H1 (cell line): ENCODE measurements at regions of chr20 and their contacts with region 1.

Region 1: GRCh38 chr20:9903048-9903655 is 64.3 kb upstream of the PAK5 start:
- DNase-seq: peak in 1 of 2 experiments; percentile 60
- H3K4me3 ChIP-seq: no peak overlapping the region
- H3K27ac ChIP-seq: no peak overlapping the region
- H3K4me1 ChIP-seq: no peaks in the 10 kb centered on the region
- H3K27me3 ChIP-seq: no peaks in the 10 kb centered on the region
- CTCF ChIP-seq: peak in 2 of 3 experiments; percentile 68 to 81; a peak in 3 of 4 replicates
- EP300 ChIP-seq: no peak
- POLR2A ChIP-seq: no peak
- RAD21 ChIP-seq: peak; percentile 46 to 61; a peak in 3 of 4 replicates

Region 2: GRCh38 chr20:9689041-9689440 is 214.1 kb before region 1 on chr20:
- CTCF ChIA-PET with region 1: interaction called, 12 read pairs
- POLR2A ChIA-PET with region 1: no interaction called
- DNase-seq: no peak
- H3K4me3 ChIP-seq: no peak overlapping the region
- H3K27ac ChIP-seq: no peak overlapping the region
- H3K4me1 ChIP-seq: peaks cover 0 to 4% (median 2%) of the 10 kb centered on the region in 4 experiments; a peak in 3 of 7 replicates
- H3K27me3 ChIP-seq: no peaks in the 10 kb centered on the region
- CTCF ChIP-seq: no peak
- EP300 ChIP-seq: no peak
- POLR2A ChIP-seq: no peak
- RAD21 ChIP-seq: no peak

Region 3: GRCh38 chr20:9829835-9830234 is 73.3 kb before region 1 on chr20:
- CTCF ChIA-PET with region 1: interaction called, 12 read pairs
- POLR2A ChIA-PET with region 1: no interaction called
- DNase-seq: peak in 1 of 2 experiments; percentile 45
- H3K4me3 ChIP-seq: no peak overlapping the region
- H3K27ac ChIP-seq: no peak overlapping the region
- H3K4me1 ChIP-seq: peaks cover 0 to 3% (median 1%) of the 10 kb centered on the region in 4 experiments; a peak in 4 of 7 replicates
- H3K27me3 ChIP-seq: no peaks in the 10 kb centered on the region
- CTCF ChIP-seq: no peak
- EP300 ChIP-seq: no peak
- POLR2A ChIP-seq: no peak
- RAD21 ChIP-seq: no peak

Region 4: GRCh38 chr20:9884061-9884460 is 19.1 kb before region 1 on chr20:
- CTCF ChIA-PET with region 1: interaction called, 34 read pairs
- POLR2A ChIA-PET with region 1: no interaction called
- DNase-seq: no peak
- H3K4me3 ChIP-seq: no peak overlapping the region
- H3K27ac ChIP-seq: no peak overlapping the region
- H3K4me1 ChIP-seq: peaks cover 0 to 2% (median 0%) of the 10 kb centered on the region in 4 experiments; a peak in 1 of 7 replicates
- H3K27me3 ChIP-seq: no peaks in the 10 kb centered on the region
- CTCF ChIP-seq: peak in 2 of 3 experiments; percentile 25 to 43; a peak in 2 of 4 replicates
- EP300 ChIP-seq: no peak
- POLR2A ChIP-seq: no peak
- RAD21 ChIP-seq: peak; percentile 65 to 75

Region 5: GRCh38 chr20:9927224-9927623 is 24.1 kb after region 1 on chr20:
- CTCF ChIA-PET with region 1: interaction called, 40 read pairs
- POLR2A ChIA-PET with region 1: no interaction called
- DNase-seq: no peak
- H3K4me3 ChIP-seq: no peak overlapping the region
- H3K27ac ChIP-seq: no peak overlapping the region
- H3K4me1 ChIP-seq: no peaks in the 10 kb centered on the region
- H3K27me3 ChIP-seq: no peaks in the 10 kb centered on the region
- CTCF ChIP-seq: no peak
- EP300 ChIP-seq: no peak
- POLR2A ChIP-seq: no peak
- RAD21 ChIP-seq: no peak